ENCODE measurements at regions of chr15 and their contacts with region 1.

Region 1: GRCh38 chr15:62591842-62592838 is 427.1 kb upstream of the C2CD4B start:
- DNase-seq: no peak
- ATAC-seq: peak; percentile 72
- H3K4me3 ChIP-seq: peak overlapping the region in 1 of 2 donors; percentile 48
- H3K27ac ChIP-seq: peak overlapping the region; percentile 73 to 88
- H3K4me1 ChIP-seq: peaks cover 10 to 11% of the 10 kb centered on the region in 2 donors
- H3K27me3 ChIP-seq: no peaks in the 10 kb centered on the region

Region 2: GRCh38 chr15:62089616-62090015 is 502.5 kb before region 1 on chr15:
- intact Hi-C with region 1: no loop called
- DNase-seq: no peak
- ATAC-seq: no peak
- H3K4me3 ChIP-seq: no peak overlapping the region
- H3K27ac ChIP-seq: no peak overlapping the region
- H3K4me1 ChIP-seq: no peaks in the 10 kb centered on the region
- H3K27me3 ChIP-seq: no peaks in the 10 kb centered on the region

Region 3: GRCh38 chr15:62482785-62483429 is 109.2 kb before region 1 on chr15:
- intact Hi-C with region 1: no loop called
- DNase-seq: no peak
- ATAC-seq: no peak
- H3K4me3 ChIP-seq: no peak overlapping the region
- H3K27ac ChIP-seq: no peak overlapping the region
- H3K4me1 ChIP-seq: peaks cover 0 to 3% of the 10 kb centered on the region in 2 donors
- H3K27me3 ChIP-seq: no peaks in the 10 kb centered on the region

Region 4: GRCh38 chr15:62549345-62549970 is 42.7 kb before region 1 on chr15:
- intact Hi-C with region 1: loop called in 1 of 2 experiments (anchors 5 kb)
- DNase-seq: no peak
- ATAC-seq: no peak
- H3K4me3 ChIP-seq: no peak overlapping the region
- H3K27ac ChIP-seq: peak overlapping the region in 1 of 2 donors; percentile 64
- H3K4me1 ChIP-seq: peaks cover 8 to 19% of the 10 kb centered on the region in 2 donors
- H3K27me3 ChIP-seq: no peaks in the 10 kb centered on the region

Measured in aorta (tissue), 5 donors.